ENCODE measurements at regions of chr4 and their contacts with region 1.

Region 1: DNA sequence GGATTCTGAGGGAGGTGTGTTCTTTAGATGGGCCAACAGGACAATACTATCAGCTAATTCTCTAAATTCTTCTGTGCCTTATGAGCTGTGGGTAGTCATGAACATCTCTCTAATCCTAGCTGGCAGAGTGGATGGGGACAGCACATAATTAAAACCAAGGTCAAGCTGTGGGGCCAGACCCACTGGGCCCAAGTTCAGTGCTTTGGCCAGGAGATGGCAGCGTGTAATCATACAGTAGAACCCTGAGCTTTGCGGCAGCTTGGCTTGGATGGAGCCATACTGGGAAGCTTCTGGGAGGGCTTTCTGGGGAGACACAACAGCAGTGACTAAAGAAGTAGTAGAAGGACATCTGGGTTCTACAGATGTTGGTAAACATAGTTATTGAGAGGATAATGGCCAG is 140.3 kb upstream of the CXCL13 start:
- DNase-seq: peak; percentile 47
- ATAC-seq: no peak
- H3K4me3 Mint-ChIP-seq: no peak overlapping the region
- H3K27ac Mint-ChIP-seq: no peak overlapping the region
- H3K4me1 Mint-ChIP-seq: no peaks in the 10 kb centered on the region
- H3K27me3 Mint-ChIP-seq: peaks cover 18% of the 10 kb centered on the region

Region 2: DNA sequence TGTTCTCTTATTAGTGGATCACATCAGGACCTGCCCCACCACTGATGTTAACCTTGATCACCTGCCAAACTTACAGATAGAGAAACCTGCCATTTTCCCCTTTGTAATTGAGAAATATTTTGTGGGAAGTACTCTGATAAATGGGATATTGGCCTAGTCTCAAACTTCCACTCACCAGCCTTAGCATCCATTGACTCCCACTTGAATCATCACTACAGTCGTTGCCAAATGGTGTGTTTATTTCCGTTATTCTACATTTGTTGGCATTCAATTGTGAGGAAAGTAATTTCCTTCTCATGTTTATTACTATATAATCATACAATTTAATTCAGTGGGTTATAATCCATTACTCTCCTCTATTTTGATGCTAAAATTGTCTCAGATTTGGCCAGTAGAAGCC is 16.1 kb before region 1 on chr4:
- CTCF ChIA-PET with region 1: interaction called, 11 read pairs
- DNase-seq: no peak
- ATAC-seq: no peak
- H3K4me3 Mint-ChIP-seq: no peak overlapping the region
- H3K27ac Mint-ChIP-seq: no peak overlapping the region
- H3K4me1 Mint-ChIP-seq: no peaks in the 10 kb centered on the region
- H3K27me3 Mint-ChIP-seq: peaks cover 13% of the 10 kb centered on the region

Region 3: DNA sequence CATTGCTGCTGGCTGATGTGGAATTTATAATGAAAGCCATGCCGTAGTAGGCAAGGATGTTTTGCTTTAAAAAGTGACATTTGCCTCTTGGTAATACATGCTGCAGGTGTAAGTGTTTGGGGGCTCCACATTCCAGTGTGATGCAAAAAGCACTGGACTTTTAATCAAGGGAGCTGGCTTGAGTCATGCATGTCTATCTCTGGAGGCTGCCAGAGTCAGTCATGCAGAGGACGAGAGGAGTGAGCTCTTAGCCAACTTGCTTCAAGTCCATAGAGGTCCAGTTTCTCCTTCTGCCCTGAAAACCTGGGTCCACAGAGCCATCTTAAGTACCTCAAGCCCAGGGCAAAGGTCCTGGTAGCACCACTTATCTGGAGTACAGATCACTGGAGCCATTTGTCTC is 128.7 kb after region 1 on chr4:
- CTCF ChIA-PET with region 1: interaction called, 48 read pairs
- DNase-seq: no peak
- ATAC-seq: no peak
- H3K4me3 Mint-ChIP-seq: no peak overlapping the region
- H3K27ac Mint-ChIP-seq: no peak overlapping the region
- H3K4me1 Mint-ChIP-seq: peaks cover 41% of the 10 kb centered on the region
- H3K27me3 Mint-ChIP-seq: peaks cover 14% of the 10 kb centered on the region

Region 4: DNA sequence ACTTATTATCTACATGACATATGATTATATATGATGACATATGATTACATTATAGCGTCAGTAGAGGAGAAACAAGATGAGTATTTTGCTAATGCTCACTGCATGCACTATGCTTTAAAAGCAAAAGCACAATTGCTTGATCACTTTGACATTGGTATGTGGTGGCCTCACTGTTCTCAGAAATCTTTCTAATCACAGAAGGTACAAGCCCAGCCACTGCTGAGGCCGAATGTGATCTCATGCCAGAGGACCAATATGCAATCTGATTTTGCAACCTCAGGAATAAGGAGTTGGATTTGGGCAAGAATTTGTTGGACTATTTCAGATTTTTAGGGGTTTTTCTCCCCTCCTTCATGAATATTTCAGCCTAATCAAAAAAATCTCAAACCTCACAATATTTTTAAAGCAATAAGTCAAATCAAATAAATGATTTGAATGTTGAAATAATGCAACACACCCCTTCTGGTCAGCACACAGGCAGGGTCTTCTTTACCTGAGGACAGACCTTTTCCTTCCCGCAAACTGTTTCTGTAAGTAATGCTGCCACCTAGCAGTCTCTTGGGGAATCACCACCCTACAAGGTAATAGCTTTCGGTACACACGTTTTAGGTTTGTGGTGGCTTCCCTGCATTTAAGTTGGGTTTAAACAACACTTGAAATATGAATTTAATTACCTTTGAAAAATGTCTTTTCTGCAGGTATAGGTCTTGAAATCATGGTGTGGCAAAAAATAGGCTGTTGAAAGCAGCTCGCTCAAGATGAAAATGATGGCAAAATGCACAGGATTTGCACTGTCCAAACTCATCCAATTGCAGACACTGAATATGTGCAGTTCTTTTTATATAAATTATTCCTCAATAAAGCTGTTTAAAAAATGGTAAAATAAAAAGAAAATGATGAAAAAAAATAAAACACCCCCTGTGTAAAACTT is 135.5 kb after region 1 on chr4:
- CTCF ChIA-PET with region 1: interaction called, 48 read pairs
- DNase-seq: peak; percentile 53
- ATAC-seq: peak; percentile 51
- H3K4me3 Mint-ChIP-seq: no peak overlapping the region
- H3K27ac Mint-ChIP-seq: no peak overlapping the region
- H3K4me1 Mint-ChIP-seq: peaks cover 13% of the 10 kb centered on the region
- H3K27me3 Mint-ChIP-seq: peaks cover 30% of the 10 kb centered on the region

Region 5: DNA sequence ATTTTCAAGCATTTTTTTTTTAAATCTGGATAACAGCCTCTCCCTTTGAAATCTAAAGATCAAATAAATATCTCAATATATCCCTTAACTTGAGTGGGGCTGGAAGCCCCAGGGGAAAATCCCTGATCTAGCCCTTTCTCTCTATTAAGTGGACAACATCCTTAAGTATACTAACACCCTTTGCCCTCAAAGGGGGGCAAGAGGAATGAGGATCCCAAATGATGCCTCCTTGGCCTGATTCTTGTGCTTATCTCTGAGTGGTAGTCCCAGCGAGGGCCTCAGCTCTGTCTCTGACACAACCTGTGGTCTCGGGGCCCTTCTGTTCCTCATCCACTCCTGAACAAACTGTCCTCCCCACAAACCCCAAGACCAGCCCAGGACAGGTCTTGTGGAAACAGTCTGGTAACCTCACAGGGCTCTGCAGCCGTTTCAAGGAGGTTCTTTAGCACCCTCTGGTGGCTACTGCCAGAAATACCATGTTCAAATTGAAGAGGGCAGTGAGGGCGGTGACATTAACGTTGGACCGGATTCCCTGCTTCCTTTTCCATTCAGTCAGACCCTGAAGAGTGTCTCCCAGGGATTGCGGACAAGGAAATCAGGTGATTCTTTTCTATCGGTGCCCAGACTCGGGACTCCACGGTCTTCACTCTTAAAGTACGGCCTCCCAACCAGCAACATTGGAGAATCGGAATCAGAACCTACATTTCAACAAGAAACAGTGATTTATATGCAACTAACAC is 153.3 kb after region 1 on chr4:
- CTCF ChIA-PET with region 1: interaction called, 16 read pairs
- DNase-seq: peak; percentile 78
- ATAC-seq: peak; percentile 91
- H3K4me3 Mint-ChIP-seq: no peak overlapping the region
- H3K27ac Mint-ChIP-seq: no peak overlapping the region
- H3K4me1 Mint-ChIP-seq: peaks cover 13% of the 10 kb centered on the region
- H3K27me3 Mint-ChIP-seq: peaks cover 37% of the 10 kb centered on the region

Measured in activated CD8-positive, alpha-beta memory T cell treated with anti-CD3 and anti-CD28 coated beads, Interleukin-2, amount 10 ng/mL, durations not matched to agents 7 days and 5 days (primary cell).